ENCODE measurements at regions of chrX and their contacts with region 1.

Region 1: DNA sequence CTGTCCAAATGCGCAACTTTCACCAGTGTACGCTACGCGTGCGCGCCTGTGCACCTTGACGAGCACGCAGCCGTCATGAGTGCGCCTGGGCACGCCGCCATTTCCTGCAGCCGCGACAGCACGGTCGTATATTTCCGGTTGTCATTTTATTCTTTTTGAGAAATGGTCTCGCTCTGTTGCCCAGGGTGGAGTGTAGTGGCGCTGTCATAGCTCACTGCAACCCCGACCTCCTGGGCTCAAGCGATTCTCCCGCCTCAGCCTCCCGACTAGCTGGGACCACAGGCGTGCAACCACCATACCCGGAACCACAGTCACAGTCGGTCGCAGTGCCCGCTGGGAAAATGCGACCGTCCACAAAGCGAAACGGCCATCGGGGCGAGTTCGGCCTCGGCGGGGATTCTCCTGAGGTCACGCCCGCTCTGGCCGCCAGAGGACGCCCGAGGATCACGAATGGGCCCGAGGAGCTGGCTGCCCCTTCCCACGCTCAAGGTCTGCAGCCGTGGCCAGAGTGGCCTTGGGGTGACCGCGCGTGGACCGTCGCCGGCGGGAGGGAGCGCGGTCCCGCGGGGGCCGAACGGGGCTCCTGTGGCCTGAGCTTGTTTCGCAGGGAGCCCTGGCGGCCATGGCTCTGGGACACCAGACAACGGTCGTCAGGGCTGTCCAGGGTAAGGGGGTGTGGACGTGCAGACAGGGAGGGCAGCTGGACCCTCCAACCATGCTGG is 23.7 kb upstream of the PNMA3 start:
- DNase-seq: peak; percentile 84
- H3K4me3 ChIP-seq: peak overlapping the region in 3 of 4 donors; percentile 30 to 40 (median 38)
- H3K27ac ChIP-seq: no peak overlapping the region
- H3K4me1 ChIP-seq: peaks cover 0 to 4% (median 0%) of the 10 kb centered on the region in 4 donors
- H3K27me3 ChIP-seq: peaks cover 0 to 2% (median 0%) of the 10 kb centered on the region in 3 donors
- CTCF ChIP-seq: peak; percentile 77 to 83 (median 81)
- EP300 ChIP-seq: no peak
- POLR2A ChIP-seq: no peak

Region 2: DNA sequence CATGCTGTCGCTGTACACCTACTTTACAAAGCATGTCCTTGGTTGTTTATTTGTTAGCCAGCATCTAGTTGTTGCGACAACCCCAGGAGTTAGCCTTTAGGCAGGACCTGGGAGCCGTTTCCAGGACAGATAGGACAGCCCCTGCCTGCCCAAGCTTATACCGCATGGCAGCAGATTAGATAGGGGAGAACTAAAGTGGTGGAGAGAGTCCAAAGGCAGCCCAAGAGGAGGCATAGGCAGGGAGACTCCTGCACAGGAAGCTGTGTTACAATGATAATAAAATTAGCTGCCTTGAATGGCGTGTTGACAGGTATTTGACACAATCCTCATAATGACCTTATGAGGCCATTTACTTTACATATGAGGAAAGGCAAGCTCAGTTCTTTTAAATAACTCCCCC is 188.7 kb before region 1 on chrX:
- intact Hi-C with region 1: no loop called
- DNase-seq: no peak
- H3K4me3 ChIP-seq: no peak overlapping the region
- H3K27ac ChIP-seq: no peak overlapping the region
- H3K4me1 ChIP-seq: no peaks in the 10 kb centered on the region
- H3K27me3 ChIP-seq: no peaks in the 10 kb centered on the region
- CTCF ChIP-seq: no peak
- EP300 ChIP-seq: no peak
- POLR2A ChIP-seq: no peak

Region 3: DNA sequence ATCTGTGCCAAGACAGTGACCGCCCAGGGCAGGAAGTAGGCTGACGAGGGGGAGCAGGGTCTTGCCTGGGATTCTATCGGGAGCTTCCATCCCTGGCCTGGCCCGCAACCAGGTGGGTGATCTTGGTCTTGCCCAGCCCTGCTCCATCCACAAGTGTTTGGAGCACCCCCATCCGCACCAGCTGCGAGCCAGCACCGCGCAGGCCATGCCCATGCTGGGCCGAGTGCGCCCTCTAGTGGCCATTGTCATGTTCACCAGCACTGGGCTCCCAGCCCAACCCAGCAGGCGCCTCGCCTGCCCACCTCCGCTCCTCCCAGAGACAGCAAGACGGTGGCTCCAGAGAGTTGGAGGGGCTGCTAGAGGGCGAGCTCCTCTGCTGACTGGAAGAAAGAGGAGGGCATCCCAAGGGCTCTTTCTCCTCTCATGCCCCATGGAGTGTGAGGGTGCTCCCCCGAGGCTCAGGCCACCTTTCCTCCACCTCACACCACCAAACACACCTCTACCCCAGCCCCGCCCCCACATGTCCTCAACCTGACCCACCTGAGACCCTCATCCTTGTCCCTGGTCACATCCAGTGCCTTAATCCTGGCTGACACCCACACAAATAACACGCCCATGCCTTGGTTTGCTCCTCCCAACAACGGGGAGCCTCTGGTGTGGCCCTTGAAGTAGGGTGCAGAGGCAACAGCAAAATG is 475.1 kb after region 1 on chrX:
- intact Hi-C with region 1: loop called (anchors 2 kb)
- DNase-seq: peak; percentile 90
- H3K4me3 ChIP-seq: no peak overlapping the region
- H3K27ac ChIP-seq: no peak overlapping the region
- H3K4me1 ChIP-seq: no peaks in the 10 kb centered on the region
- H3K27me3 ChIP-seq: no peaks in the 10 kb centered on the region
- CTCF ChIP-seq: peak; percentile 50 to 71 (median 62)
- EP300 ChIP-seq: no peak
- POLR2A ChIP-seq: no peak

Region 4: GRCh38 chrX:153592966-153593688 is 560.6 kb after region 1 on chrX:
- intact Hi-C with region 1: no loop called
- DNase-seq: no peak
- H3K4me3 ChIP-seq: no peak overlapping the region
- H3K27ac ChIP-seq: no peak overlapping the region
- H3K4me1 ChIP-seq: peaks cover 0 to 6% (median 3%) of the 10 kb centered on the region in 4 donors
- H3K27me3 ChIP-seq: no peaks in the 10 kb centered on the region
- CTCF ChIP-seq: no peak
- EP300 ChIP-seq: no peak
- POLR2A ChIP-seq: no peak

Measured in sigmoid colon (tissue), 7 donors.